ENCODE measurements at regions of chr12 and their contacts with region 1.

Region 1: GRCh38 chr12:92493816-92494215 is 209.0 kb upstream of the PLEKHG7 start:
- DNase-seq: no peak
- H3K4me3 ChIP-seq: no peak overlapping the region
- H3K27ac ChIP-seq: no peak overlapping the region
- H3K4me1 ChIP-seq: peaks cover 19% of the 10 kb centered on the region
- CTCF ChIP-seq: no peak

Region 2: DNA sequence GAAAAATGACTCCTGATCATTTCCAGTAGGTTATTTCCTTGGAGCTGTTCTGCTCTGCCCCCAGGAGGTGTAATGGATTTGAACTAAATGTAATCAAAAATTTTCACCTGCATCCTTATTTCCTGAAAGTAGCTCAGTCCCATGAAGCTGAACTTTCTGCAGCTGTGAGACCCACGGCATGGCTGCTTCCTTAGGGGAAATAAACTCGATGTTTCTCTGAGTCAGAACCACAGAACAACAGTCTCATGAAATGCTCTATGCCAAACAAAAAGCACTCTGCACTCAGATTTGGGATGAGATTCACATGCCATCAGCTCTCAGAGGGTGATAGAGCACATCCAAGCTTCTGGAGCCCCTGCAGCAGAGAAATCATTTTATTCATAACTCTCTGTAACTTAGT is 15.1 kb before region 1 on chr12:
- CTCF ChIA-PET with region 1: no interaction called
- POLR2A ChIA-PET with region 1: interaction called, 109 read pairs
- intact Hi-C with region 1: no loop called
- DNase-seq: no peak
- H3K4me3 ChIP-seq: no peak overlapping the region
- H3K27ac ChIP-seq: no peak overlapping the region
- H3K4me1 ChIP-seq: peaks cover 35% of the 10 kb centered on the region
- CTCF ChIP-seq: no peak

Region 3: DNA sequence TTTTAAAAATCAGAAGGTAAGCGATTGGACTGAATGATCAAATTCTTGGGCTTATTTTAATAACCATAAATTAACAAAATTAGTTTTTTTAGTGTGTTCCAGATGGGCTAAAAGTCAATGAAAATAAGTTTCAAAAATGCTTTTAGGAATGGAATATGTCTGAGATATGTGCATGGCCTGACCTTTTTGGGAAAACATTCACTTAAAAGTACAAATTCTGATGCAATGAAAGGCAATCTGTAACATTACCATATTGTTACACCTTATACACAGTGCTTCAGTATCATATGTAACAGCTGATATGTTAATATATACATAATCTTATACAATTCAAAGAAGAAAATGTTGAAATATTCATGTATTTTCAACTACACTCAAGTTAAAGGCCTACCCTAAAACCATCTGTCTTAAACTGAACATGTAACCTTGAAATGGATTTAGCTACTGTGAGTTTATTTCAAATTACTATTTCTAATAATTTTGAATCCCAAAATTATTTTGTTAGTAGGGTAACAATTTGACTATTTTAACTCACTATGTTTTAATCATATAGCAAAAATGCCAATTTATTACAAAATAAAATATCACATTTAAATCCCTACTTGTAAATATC is 350.4 kb after region 1 on chr12:
- CTCF ChIA-PET with region 1: no interaction called
- POLR2A ChIA-PET with region 1: no interaction called
- intact Hi-C with region 1: no loop called
- DNase-seq: no peak
- H3K4me3 ChIP-seq: no peak overlapping the region
- H3K27ac ChIP-seq: no peak overlapping the region
- H3K4me1 ChIP-seq: no peaks in the 10 kb centered on the region
- CTCF ChIP-seq: no peak